ENCODE measurements at regions of chr7 and their contacts with region 1.

Region 1: GRCh38 chr7:129825496-129826267 is 127.1 kb downstream of the UBE2H start:
- DNase-seq: peak; percentile 43
- ATAC-seq: peak; percentile 87
- H3K4me3 ChIP-seq: peak overlapping the region; percentile 70 to 74
- H3K27ac ChIP-seq: peak overlapping the region; percentile 81
- H3K4me1 ChIP-seq: peaks cover 10% of the 10 kb centered on the region
- H3K27me3 ChIP-seq: no peaks in the 10 kb centered on the region
- CTCF ChIP-seq: peak; percentile 92

Region 2: DNA sequence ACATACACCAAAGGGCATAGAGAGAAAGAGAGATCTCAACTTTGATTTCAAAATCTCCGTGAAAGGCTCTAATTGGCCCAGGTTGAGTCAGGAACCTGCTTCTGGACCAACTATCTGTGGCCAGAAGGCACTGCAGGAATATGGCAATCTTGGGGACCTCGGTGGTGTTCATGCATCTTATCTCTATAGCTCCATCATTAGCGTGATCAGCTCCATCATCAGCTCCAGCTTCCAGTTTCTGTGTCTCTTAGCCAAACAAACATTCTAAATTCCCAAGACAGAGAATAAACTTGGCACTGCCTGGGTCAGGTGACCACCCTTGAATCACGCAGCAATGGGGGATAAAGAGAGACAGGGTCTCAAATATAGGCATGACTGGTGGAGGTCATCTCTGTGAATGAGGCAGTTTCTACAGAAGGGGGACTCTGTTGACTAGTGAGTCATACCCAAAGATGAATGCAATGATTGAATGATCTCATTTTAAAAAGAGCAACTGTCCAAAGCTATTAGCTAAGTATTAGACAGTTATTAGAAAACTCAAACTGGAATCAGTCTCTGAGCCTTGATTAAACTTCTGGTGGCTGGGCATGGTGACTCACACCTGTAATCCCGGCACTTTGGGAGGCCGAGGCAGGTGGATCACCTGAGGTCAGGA is 219.6 kb before region 1 on chr7:
- CTCF ChIA-PET with region 1: interaction called, 3 read pairs
- POLR2A ChIA-PET with region 1: interaction called, 11 read pairs
- in situ Hi-C with region 1: no loop called
- intact Hi-C with region 1: no loop called
- DNase-seq: no peak
- ATAC-seq: no peak
- H3K4me3 ChIP-seq: no peak overlapping the region
- H3K27ac ChIP-seq: no peak overlapping the region
- H3K4me1 ChIP-seq: peaks cover 7% of the 10 kb centered on the region; the same call in 1 of the 2 replicates
- H3K27me3 ChIP-seq: no peaks in the 10 kb centered on the region
- CTCF ChIP-seq: no peak

Region 3: GRCh38 chr7:129664029-129665012 is 161.4 kb before region 1 on chr7:
- CTCF ChIA-PET with region 1: interaction called, 7 read pairs
- POLR2A ChIA-PET with region 1: interaction called, 5 read pairs
- in situ Hi-C with region 1: no loop called
- intact Hi-C with region 1: loop called (anchors 1 kb)
- DNase-seq: peak; percentile 69
- ATAC-seq: peak; percentile 82
- H3K4me3 ChIP-seq: no peak overlapping the region
- H3K27ac ChIP-seq: peak overlapping the region; percentile 13; the same call in 1 of the 2 replicates
- H3K4me1 ChIP-seq: peaks cover 8% of the 10 kb centered on the region
- H3K27me3 ChIP-seq: no peaks in the 10 kb centered on the region
- CTCF ChIP-seq: peak; percentile 67; the same call in 1 of the 2 replicates

Region 4: DNA sequence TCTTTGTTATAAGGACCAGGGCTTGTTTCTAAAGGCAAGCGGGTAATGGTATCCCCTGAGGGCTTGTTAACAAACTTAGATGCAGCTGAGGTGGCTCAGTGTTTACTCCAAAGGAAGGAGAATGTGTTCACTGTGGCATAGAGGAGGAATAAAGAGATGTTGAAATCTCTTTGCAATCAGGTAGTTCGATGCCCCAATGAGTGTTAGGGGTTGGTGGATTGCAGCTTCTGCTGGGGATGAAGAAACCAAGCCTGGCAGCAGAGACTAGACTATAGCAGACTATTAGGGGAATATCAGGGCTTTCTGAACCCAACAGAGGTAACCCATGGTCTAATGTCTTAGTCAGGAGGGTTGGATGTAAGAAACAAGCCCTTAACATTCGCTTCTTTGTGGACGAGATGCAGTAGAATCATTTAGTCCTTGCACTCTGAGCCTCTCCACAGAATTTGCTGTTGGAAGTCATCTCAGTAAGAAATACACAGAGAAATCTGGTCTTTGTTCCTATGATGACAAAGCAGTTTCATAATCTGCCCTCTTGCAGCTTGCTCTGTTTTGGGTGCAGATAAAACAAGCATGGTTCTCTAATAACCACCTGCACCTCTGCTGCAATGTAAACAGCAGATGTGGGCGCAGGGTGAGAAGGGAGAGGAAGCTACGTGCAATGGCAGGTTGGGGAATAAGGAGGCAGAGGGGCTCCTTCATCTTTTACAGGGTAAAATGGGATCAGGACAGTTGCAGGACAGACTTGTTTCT is 105.5 kb before region 1 on chr7:
- CTCF ChIA-PET with region 1: no interaction called
- POLR2A ChIA-PET with region 1: no interaction called
- in situ Hi-C with region 1: no loop called
- intact Hi-C with region 1: no loop called
- DNase-seq: no peak
- ATAC-seq: no peak
- H3K4me3 ChIP-seq: no peak overlapping the region
- H3K27ac ChIP-seq: no peak overlapping the region
- H3K4me1 ChIP-seq: no peaks in the 10 kb centered on the region
- H3K27me3 ChIP-seq: no peaks in the 10 kb centered on the region
- CTCF ChIP-seq: no peak

Region 5: DNA sequence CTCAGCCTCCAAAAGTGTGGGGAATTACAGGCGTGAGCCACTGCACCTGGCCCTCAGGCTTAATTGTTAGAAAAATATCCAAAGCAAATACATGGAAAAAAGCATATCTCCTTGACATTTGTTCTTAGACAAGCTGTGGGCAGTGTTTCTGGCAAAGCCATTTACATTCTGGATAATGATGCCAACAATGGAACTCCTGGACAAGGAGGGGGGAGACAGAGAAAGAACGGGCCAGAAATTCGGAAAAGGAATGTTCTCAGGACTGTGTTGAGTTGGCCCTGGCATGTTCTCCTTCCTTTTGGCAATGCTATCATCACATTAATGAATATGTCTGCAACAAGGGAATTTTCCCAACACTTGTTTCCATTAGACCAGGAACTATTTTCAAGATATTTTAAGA is 38.4 kb after region 1 on chr7:
- CTCF ChIA-PET with region 1: interaction called, 4 read pairs
- POLR2A ChIA-PET with region 1: interaction called, 11 read pairs
- in situ Hi-C with region 1: no loop called
- intact Hi-C with region 1: no loop called
- DNase-seq: no peak
- ATAC-seq: no peak
- H3K4me3 ChIP-seq: no peak overlapping the region
- H3K27ac ChIP-seq: no peak overlapping the region
- H3K4me1 ChIP-seq: peaks cover 10% of the 10 kb centered on the region
- H3K27me3 ChIP-seq: no peaks in the 10 kb centered on the region
- CTCF ChIP-seq: no peak

Region 6: GRCh38 chr7:130010689-130011412 is 185.2 kb after region 1 on chr7:
- CTCF ChIA-PET with region 1: interaction called, 12 read pairs
- POLR2A ChIA-PET with region 1: no interaction called
- in situ Hi-C with region 1: no loop called
- intact Hi-C with region 1: loop called (anchors 2 kb)
- DNase-seq: peak; percentile 98
- ATAC-seq: peak; percentile 58; the same call in 1 of the 2 replicates
- H3K4me3 ChIP-seq: no peak overlapping the region
- H3K27ac ChIP-seq: peak overlapping the region; percentile 52; the same call in 1 of the 2 replicates
- H3K4me1 ChIP-seq: peaks cover 22% of the 10 kb centered on the region
- H3K27me3 ChIP-seq: no peaks in the 10 kb centered on the region
- CTCF ChIP-seq: peak; percentile 93

Region 7: GRCh38 chr7:130127821-130128317 is 302.2 kb after region 1 on chr7:
- CTCF ChIA-PET with region 1: interaction called, 11 read pairs
- POLR2A ChIA-PET with region 1: no interaction called
- in situ Hi-C with region 1: no loop called
- intact Hi-C with region 1: no loop called
- DNase-seq: no peak
- ATAC-seq: no peak
- H3K4me3 ChIP-seq: no peak overlapping the region
- H3K27ac ChIP-seq: 0 out of 2 replicates have a peak overlapping the region, but pooled peaks have one; percentile 0
- H3K4me1 ChIP-seq: 0 out of 2 replicates have a peak, but pooled peaks cover 6% of the 10 kb centered on the region
- H3K27me3 ChIP-seq: no peaks in the 10 kb centered on the region
- CTCF ChIP-seq: no peak

Region 8: GRCh38 chr7:130388671-130389070 is 563.0 kb after region 1 on chr7:
- CTCF ChIA-PET with region 1: no interaction called
- POLR2A ChIA-PET with region 1: interaction called, 18 read pairs
- in situ Hi-C with region 1: no loop called
- intact Hi-C with region 1: no loop called
- DNase-seq: no peak
- ATAC-seq: no peak
- H3K4me3 ChIP-seq: no peak overlapping the region
- H3K27ac ChIP-seq: no peak overlapping the region
- H3K4me1 ChIP-seq: no peaks in the 10 kb centered on the region
- H3K27me3 ChIP-seq: no peaks in the 10 kb centered on the region
- CTCF ChIP-seq: no peak

Measured in Panc1 (cell line).